Panc1 (cell line): ENCODE measurements at regions of chr18 and their contacts with region 1.

Region 1: GRCh38 chr18:35949903-35950627 is 22.4 kb upstream of the RMP24 start:
- DNase-seq: no peak
- ATAC-seq: peak; percentile 91
- H3K4me3 ChIP-seq: peak overlapping the region; percentile 55 to 78
- H3K27ac ChIP-seq: peak overlapping the region; percentile 82
- H3K4me1 ChIP-seq: peaks cover 7% of the 10 kb centered on the region
- H3K27me3 ChIP-seq: no peaks in the 10 kb centered on the region
- CTCF ChIP-seq: peak; percentile 84

Region 2: GRCh38 chr18:35019933-35020332 is 930.1 kb before region 1 on chr18:
- CTCF ChIA-PET with region 1: no interaction called
- POLR2A ChIA-PET with region 1: no interaction called
- in situ Hi-C with region 1: no loop called
- intact Hi-C with region 1: no loop called
- DNase-seq: no peak
- ATAC-seq: no peak
- H3K4me3 ChIP-seq: no peak overlapping the region
- H3K27ac ChIP-seq: no peak overlapping the region
- H3K4me1 ChIP-seq: no peaks in the 10 kb centered on the region
- H3K27me3 ChIP-seq: no peaks in the 10 kb centered on the region
- CTCF ChIP-seq: no peak

Region 3: DNA sequence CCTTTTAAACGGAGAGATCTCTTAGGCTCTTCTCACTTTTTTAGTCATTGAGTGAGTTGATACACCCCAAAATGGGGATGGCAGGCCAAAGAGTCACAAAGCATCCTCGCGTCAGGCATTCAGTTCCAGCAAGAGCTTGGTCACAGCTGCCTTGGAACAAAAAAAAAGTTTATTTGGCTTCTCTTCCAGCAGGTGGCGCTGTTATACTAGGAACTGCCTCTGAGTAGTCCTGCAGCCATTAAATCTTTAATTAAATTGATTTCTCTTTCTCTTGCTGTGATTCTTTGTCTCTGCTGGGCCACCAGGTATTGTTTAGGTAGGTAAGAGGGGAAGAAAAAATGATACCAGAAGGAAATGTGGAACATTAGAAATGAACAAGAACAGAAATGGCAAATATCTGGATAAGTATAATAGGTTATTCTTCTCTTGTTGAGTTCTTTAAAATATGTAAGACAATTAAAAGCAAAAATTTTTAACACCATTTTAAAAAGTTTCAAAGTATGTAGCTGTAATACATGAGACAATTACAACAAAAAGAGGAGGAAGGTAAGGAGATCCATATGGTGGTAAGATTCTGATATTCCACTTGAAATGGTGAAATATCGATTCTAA is 193.5 kb before region 1 on chr18:
- CTCF ChIA-PET with region 1: no interaction called
- POLR2A ChIA-PET with region 1: no interaction called
- in situ Hi-C with region 1: no loop called
- intact Hi-C with region 1: loop called (anchors 1 kb)
- DNase-seq: peak; percentile 12
- ATAC-seq: peak; percentile 93
- H3K4me3 ChIP-seq: no peak overlapping the region
- H3K27ac ChIP-seq: no peak overlapping the region
- H3K4me1 ChIP-seq: no peaks in the 10 kb centered on the region; the same call in 1 of the 2 replicates
- H3K27me3 ChIP-seq: no peaks in the 10 kb centered on the region
- CTCF ChIP-seq: peak; percentile 74

Region 4: GRCh38 chr18:35998967-35999366 is 48.9 kb after region 1 on chr18:
- CTCF ChIA-PET with region 1: interaction called, 11 read pairs
- POLR2A ChIA-PET with region 1: no interaction called
- in situ Hi-C with region 1: no loop called
- intact Hi-C with region 1: no loop called
- DNase-seq: no peak
- ATAC-seq: no peak
- H3K4me3 ChIP-seq: no peak overlapping the region
- H3K27ac ChIP-seq: no peak overlapping the region
- H3K4me1 ChIP-seq: no peaks in the 10 kb centered on the region
- H3K27me3 ChIP-seq: no peaks in the 10 kb centered on the region
- CTCF ChIP-seq: peak; percentile 33; the same call in 1 of the 2 replicates